Activated CD4-positive, alpha-beta memory T cell treated with anti-CD3 and anti-CD28 coated beads for 36 hours (primary cell): ENCODE measurements at regions of chr1 and their contacts with region 1.

Region 1: DNA sequence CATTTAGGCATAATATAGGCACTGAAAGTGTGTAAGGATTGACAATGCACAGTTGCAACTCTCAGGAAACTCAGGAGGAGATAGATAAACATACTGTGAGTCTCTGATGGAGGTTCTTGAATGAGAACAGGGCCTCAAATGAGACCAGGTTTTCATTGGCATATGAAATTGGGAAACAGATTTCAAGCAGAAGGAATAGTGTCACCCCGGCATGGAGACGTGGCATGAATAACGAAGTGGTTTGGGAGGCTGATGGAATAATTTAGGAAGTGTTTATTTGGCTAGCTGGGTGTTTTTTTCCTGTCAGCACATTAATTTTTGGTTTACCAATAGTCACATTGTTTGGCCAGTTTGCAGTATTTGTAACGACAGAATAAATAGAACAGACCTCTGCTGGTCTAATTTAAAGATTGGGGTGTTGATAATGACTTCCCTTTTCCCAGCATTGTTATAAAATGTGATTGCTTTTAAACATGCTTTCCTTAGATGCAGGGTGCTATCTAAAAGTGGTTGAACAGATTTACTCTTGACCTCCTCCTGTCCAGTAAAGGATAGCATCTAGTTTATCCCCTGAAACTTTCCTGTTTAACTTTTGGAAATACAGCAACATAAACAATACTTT is 132.0 kb downstream of the C1orf21 start:
- DNase-seq: no peak
- H3K4me3 Mint-ChIP-seq: no peak overlapping the region
- H3K27ac Mint-ChIP-seq: no peak overlapping the region
- H3K4me1 Mint-ChIP-seq: no peaks in the 10 kb centered on the region
- H3K27me3 Mint-ChIP-seq: peaks cover 4% of the 10 kb centered on the region

Region 2: GRCh38 chr1:183689770-183690204 is 829.1 kb before region 1 on chr1:
- CTCF ChIA-PET with region 1: no interaction called
- POLR2A ChIA-PET with region 1: no interaction called
- intact Hi-C with region 1: no loop called
- DNase-seq: peak; percentile 49
- H3K4me3 Mint-ChIP-seq: no peak overlapping the region
- H3K27ac Mint-ChIP-seq: no peak overlapping the region
- H3K4me1 Mint-ChIP-seq: peaks cover 2% of the 10 kb centered on the region
- H3K27me3 Mint-ChIP-seq: no peaks in the 10 kb centered on the region

Region 3: GRCh38 chr1:184425449-184426218 is 93.2 kb before region 1 on chr1:
- CTCF ChIA-PET with region 1: no interaction called
- POLR2A ChIA-PET with region 1: no interaction called
- intact Hi-C with region 1: no loop called
- DNase-seq: no peak
- H3K4me3 Mint-ChIP-seq: no peak overlapping the region
- H3K27ac Mint-ChIP-seq: no peak overlapping the region
- H3K4me1 Mint-ChIP-seq: no peaks in the 10 kb centered on the region
- H3K27me3 Mint-ChIP-seq: peaks cover 14% of the 10 kb centered on the region

Region 4: GRCh38 chr1:184604152-184604900 is 85.5 kb after region 1 on chr1:
- CTCF ChIA-PET with region 1: no interaction called
- POLR2A ChIA-PET with region 1: no interaction called
- intact Hi-C with region 1: loop called (anchors 5 kb)
- DNase-seq: no peak
- H3K4me3 Mint-ChIP-seq: no peak overlapping the region
- H3K27ac Mint-ChIP-seq: no peak overlapping the region
- H3K4me1 Mint-ChIP-seq: no peaks in the 10 kb centered on the region
- H3K27me3 Mint-ChIP-seq: no peaks in the 10 kb centered on the region

Region 5: DNA sequence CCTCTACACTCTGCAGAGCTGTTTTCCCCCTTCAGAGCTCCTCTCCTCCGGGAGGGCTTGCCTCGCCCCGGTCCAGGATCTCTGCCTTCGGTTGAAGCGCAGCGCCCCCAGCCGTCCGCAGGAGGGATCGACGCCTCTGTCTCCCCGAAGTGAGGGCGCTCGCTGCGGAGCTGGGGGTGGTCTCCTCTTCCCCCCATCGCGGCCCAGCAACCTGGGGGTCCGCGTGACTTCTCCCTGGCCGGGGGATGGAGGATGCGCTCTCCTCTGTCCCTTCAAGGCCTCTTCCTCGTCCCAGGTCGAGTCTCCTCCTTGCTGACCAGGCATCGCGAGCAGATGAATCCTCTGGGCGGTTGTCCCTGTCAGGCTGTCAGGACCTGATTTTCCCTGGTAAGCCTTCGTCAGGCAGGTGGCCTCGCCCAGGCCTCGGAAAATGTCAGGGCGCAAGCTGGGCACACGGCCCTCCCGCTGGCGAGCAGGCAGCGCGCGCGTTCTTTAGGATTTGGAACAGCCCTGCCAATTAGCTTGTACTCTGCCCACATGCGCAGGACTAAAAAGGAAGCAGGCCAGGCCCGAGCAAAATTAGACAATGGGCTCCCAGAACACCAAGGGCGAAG is 145.3 kb after region 1 on chr1:
- CTCF ChIA-PET with region 1: no interaction called
- POLR2A ChIA-PET with region 1: no interaction called
- intact Hi-C with region 1: no loop called
- DNase-seq: peak; percentile 63
- H3K4me3 Mint-ChIP-seq: no peak overlapping the region
- H3K27ac Mint-ChIP-seq: no peak overlapping the region
- H3K4me1 Mint-ChIP-seq: peaks cover 3% of the 10 kb centered on the region
- H3K27me3 Mint-ChIP-seq: peaks cover 17% of the 10 kb centered on the region

Region 6: DNA sequence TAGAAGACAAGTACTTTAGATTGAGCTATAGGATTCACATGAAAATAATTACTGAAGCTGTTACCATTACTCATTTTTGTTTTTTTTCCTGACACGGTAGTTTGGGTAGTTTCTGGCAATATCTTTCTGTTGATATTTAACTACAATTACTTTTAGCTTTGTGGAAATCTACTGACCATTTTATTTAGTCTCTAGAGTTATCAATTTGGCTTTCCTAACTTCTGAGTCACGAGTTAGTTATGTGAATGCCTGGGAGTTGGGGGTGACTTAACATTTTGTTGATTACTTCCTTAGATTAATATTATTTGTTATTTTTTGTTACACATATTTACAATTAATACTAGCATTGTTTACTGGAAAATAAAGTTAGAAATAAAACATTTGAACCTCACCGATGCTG is 1375.9 kb after region 1 on chr1:
- CTCF ChIA-PET with region 1: no interaction called
- POLR2A ChIA-PET with region 1: no interaction called
- intact Hi-C with region 1: no loop called
- DNase-seq: no peak
- H3K4me3 Mint-ChIP-seq: no peak overlapping the region
- H3K27ac Mint-ChIP-seq: no peak overlapping the region
- H3K4me1 Mint-ChIP-seq: no peaks in the 10 kb centered on the region
- H3K27me3 Mint-ChIP-seq: no peaks in the 10 kb centered on the region